ENCODE measurements at regions of chr22 and their contacts with region 1.

Region 1: DNA sequence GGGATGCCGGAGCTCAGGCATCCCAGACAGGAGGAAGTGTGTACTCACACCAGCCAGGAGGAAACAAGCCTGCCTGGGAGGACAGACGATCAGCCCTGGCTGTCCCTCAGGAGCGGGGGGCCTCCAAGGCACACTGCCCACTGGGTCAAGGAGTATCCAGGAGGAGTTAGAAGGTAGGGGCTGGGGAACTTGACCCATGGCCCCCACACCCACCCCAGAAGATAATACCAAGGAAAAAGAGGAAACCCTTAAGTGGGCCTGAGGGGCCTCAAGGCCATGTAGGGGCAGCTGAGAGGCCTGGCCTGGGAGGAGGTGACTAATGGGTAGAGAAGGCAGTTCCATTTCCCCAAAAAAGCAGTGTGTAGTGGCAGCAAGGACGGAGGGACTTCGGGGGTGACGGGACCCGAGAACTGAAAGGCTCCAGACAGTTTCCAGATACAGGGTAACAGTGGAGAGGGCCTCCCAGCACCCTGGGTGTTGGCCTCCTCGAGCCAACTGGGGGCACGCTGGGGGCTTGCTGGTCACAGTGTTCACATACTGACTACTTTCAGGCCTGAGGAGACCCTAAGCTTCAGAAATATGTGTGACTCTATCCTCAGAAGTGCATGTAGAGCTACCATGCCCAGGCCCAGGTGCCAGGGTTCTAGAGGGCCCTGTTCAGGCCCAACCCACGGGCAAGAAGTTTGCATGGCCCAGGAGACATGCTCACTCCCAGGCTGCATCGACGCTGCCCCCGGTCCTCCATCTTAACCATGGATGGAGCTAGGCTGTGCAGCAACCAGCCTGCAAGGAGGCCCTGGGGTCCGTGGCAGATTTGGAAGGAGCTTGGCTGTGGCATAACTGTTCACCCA is 75.7 kb upstream of the PITPNB start:
- DNase-seq: peak in 1 of 2 donors; percentile 30
- H3K4me3 ChIP-seq: no peak overlapping the region
- H3K27ac ChIP-seq: no peak overlapping the region
- H3K4me1 ChIP-seq: no peaks in the 10 kb centered on the region
- H3K27me3 ChIP-seq: no peaks in the 10 kb centered on the region
- CTCF ChIP-seq: no peak
- POLR2A ChIP-seq: no peak

Region 2: DNA sequence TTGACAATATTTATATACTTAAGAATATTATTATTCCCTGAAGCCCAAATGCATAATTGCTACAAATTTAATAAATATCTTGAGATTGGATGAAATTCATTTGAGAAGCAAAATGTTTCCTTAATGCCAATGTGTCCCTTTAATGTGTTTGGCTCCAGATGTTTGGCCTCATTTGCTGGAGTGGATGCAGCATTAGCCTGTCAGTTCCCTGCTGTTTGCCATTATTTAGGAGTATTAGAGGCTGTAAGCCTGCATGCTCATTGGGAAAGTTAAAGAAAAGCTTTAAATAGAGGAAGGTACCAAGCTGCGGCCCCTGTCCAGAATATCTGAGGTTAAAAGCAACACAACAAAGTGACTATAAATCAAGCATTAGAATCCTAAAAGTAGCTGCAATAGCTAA is 20.9 kb before region 1 on chr22:
- intact Hi-C with region 1: loop called (anchors 2 kb)
- DNase-seq: no peak
- H3K4me3 ChIP-seq: no peak overlapping the region
- H3K27ac ChIP-seq: no peak overlapping the region
- H3K4me1 ChIP-seq: no peaks in the 10 kb centered on the region
- H3K27me3 ChIP-seq: no peaks in the 10 kb centered on the region
- CTCF ChIP-seq: no peak
- POLR2A ChIP-seq: no peak

Measured in breast epithelium (tissue), 4 donors.